Caco-2 (cell line): ENCODE measurements at regions of chr15 and their contacts with region 1.

Region 1: DNA sequence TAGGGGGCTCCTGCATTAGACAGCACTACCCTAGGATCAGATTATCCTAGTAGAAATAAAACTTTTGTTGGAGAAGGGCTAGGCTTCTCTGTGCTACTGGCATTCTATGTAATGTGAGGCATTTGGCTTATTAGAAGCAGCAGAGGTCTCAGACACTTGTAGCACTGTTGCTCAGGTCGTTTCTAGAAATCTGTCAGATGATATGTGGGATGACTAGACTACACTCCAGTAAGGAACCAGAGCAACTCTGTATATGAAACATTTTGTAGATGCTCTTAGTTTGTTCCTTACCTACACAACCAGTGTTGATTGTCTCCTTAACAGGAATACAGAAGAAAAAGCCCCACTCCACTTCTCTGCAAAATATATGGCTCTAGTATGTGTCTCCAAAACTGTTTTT is 21.9 kb upstream of the FBXL22 start:
- DNase-seq: no peak
- H3K4me3 ChIP-seq: no peak overlapping the region
- H3K4me3 Mint-ChIP-seq: no peak overlapping the region
- H3K27ac Mint-ChIP-seq: no peak overlapping the region
- H3K4me1 ChIP-seq: no peaks in the 10 kb centered on the region
- H3K4me1 Mint-ChIP-seq: no peaks in the 10 kb centered on the region
- H3K27me3 ChIP-seq: no peaks in the 10 kb centered on the region
- H3K27me3 Mint-ChIP-seq: no peaks in the 10 kb centered on the region
- CTCF ChIP-seq: no peak

Region 2: DNA sequence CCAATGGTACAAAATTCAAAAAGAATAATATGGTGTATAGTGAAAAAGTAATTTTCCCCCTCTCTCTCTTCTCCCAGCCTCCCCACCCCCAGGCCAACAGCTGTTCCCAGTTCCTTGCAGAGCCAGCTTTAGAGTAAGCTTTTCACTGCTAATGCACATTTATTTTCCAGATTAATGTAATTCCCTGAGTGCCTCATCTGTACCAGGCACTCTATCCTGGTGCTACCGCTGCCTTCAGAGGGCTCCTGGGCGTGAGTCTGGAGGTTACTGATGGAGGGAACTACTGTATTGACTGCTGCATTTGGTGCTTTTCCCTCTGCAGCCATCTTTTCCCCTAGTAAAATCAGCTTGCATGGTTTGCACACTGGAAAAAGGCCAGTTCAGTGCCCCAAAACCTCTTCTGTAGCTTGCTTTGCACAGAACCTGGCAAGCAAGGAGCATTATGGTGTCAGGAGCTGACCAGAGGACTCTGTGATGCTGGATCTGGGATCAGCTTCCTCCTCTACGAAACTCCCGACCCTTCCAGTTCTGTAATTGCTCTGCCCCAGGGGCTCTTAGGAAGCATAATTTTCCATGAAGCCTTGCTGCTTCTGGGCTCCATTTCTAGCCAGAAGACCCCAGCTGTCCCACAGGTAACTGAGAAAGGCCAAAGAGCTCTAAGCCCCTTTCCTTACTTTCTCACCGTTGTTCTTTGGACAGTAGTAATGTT is 79.4 kb before region 1 on chr15:
- CTCF ChIA-PET with region 1: interaction called, 10 read pairs
- POLR2A ChIA-PET with region 1: no interaction called
- intact Hi-C with region 1: no loop called
- DNase-seq: no peak
- H3K4me3 ChIP-seq: no peak overlapping the region
- H3K4me3 Mint-ChIP-seq: no peak overlapping the region
- H3K27ac Mint-ChIP-seq: no peak overlapping the region
- H3K4me1 ChIP-seq: peaks cover 18% of the 10 kb centered on the region; the same call in 1 of the 2 replicates
- H3K4me1 Mint-ChIP-seq: peaks cover 9% of the 10 kb centered on the region
- H3K27me3 ChIP-seq: no peaks in the 10 kb centered on the region
- H3K27me3 Mint-ChIP-seq: no peaks in the 10 kb centered on the region
- CTCF ChIP-seq: no peak